Caco-2 (cell line): ENCODE measurements at regions of chr14 and their contacts with region 1.

Region 1: DNA sequence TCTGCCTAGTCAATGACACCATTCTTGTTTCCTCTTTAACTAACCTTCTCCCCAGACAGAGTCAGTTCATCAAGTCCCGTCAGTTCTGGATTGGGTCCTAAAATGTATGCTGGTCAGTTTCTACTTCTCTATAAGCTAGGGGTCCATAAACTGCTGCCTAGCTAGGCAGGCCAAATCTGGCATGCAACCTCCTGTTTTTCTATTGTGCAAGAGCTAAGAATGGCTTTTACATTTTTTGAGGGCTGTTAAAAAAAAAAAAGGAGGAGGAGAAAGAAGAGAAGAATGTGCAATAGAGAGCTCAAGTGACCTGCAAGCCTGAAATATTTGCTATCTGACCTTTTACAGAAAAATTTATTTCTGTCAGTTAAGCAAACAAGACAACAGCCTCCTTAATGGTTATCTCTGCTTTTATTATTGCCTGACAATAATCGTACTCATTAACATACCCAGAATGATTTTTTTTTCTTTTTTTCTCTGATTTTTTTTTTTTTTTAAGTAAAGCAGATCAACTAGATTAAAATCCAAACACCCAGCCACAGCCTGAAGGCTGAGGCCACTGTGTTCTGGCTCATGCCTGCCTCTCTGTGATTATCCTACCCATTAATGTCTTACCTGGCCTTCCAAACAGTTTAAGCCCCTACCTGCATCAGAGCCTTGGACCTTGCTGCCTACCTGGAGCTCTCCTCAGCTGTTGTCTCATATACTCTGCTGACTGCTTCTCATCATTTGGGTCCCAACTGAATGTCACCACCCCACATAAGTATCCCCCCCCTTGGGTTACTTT is 6.6 kb upstream of the TMED10 start:
- DNase-seq: peak; percentile 68 to 69
- H3K4me3 ChIP-seq: no peak overlapping the region
- H3K4me3 Mint-ChIP-seq: peak overlapping the region; percentile 27
- H3K27ac Mint-ChIP-seq: peak overlapping the region; percentile 81
- H3K4me1 ChIP-seq: peaks cover 32% of the 10 kb centered on the region
- H3K4me1 Mint-ChIP-seq: peaks cover 14% of the 10 kb centered on the region
- H3K27me3 ChIP-seq: no peaks in the 10 kb centered on the region
- H3K27me3 Mint-ChIP-seq: no peaks in the 10 kb centered on the region
- CTCF ChIP-seq: no peak

Region 2: DNA sequence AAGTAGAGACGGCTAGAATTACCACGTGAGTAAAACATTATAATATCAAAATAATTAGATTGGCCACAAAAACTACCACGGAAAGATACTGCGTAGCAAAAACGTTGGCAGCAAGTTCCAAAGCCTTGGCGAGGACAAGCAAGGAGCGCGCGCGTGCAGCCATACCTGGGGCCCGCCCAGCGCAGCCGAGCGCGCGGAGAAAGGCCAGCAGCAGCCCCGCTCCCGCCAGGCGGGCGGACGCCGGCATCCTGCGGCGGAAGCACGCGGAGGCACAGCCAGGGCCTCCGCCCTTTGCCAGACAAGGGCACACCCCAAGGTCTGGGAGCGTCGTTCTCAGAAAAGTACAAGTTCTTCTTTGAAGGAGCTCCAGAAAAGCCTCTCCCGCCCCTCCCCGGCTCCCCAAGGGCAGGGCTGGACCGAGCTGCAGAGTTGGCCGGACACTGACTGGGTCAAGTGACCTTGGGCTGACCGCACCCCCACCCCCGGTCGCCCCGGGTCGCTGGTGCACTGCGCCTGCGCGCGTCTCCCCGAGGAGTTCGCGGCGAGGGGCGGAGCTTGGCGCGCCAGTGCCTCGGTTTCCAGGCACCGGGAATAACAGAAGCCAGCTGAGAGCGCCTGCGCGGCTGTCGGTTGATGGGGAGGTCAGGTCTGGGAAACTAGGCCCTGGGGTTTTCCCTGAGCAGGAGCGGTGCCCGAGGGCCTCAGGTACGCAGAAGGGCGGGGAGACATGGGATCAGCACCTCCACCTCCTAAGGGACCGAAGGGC is 113.8 kb before region 1 on chr14 and contains the start of gene ZC2HC1C:
- CTCF ChIA-PET with region 1: no interaction called
- POLR2A ChIA-PET with region 1: no interaction called
- intact Hi-C with region 1: no loop called
- DNase-seq: peak; percentile 94 to 97
- H3K4me3 ChIP-seq: peak within 1 kb of the TSS; percentile 54
- H3K4me3 Mint-ChIP-seq: no peak within 1 kb of the TSS
- H3K27ac Mint-ChIP-seq: no peak within 1 kb of the TSS
- H3K4me1 ChIP-seq: peaks cover 5% of the 10 kb centered on the region
- H3K4me1 Mint-ChIP-seq: peaks cover 6% of the 10 kb centered on the region
- H3K27me3 ChIP-seq: no peaks in the 10 kb centered on the region
- H3K27me3 Mint-ChIP-seq: no peaks in the 10 kb centered on the region
- CTCF ChIP-seq: no peak
- total RNA-seq, gene ZC2HC1C: 2.5 and 3.8 TPM in 2 replicates

Region 3: GRCh38 chr14:75198291-75198933 is 15.4 kb after region 1 on chr14:
- CTCF ChIA-PET with region 1: no interaction called
- POLR2A ChIA-PET with region 1: no interaction called
- intact Hi-C with region 1: loop called (anchors 1 kb)
- DNase-seq: no peak
- H3K4me3 ChIP-seq: no peak overlapping the region
- H3K4me3 Mint-ChIP-seq: no peak overlapping the region
- H3K27ac Mint-ChIP-seq: no peak overlapping the region
- H3K4me1 ChIP-seq: peaks cover 32% of the 10 kb centered on the region
- H3K4me1 Mint-ChIP-seq: peaks cover 23% of the 10 kb centered on the region
- H3K27me3 ChIP-seq: no peaks in the 10 kb centered on the region
- H3K27me3 Mint-ChIP-seq: no peaks in the 10 kb centered on the region
- CTCF ChIP-seq: no peak

Region 4: DNA sequence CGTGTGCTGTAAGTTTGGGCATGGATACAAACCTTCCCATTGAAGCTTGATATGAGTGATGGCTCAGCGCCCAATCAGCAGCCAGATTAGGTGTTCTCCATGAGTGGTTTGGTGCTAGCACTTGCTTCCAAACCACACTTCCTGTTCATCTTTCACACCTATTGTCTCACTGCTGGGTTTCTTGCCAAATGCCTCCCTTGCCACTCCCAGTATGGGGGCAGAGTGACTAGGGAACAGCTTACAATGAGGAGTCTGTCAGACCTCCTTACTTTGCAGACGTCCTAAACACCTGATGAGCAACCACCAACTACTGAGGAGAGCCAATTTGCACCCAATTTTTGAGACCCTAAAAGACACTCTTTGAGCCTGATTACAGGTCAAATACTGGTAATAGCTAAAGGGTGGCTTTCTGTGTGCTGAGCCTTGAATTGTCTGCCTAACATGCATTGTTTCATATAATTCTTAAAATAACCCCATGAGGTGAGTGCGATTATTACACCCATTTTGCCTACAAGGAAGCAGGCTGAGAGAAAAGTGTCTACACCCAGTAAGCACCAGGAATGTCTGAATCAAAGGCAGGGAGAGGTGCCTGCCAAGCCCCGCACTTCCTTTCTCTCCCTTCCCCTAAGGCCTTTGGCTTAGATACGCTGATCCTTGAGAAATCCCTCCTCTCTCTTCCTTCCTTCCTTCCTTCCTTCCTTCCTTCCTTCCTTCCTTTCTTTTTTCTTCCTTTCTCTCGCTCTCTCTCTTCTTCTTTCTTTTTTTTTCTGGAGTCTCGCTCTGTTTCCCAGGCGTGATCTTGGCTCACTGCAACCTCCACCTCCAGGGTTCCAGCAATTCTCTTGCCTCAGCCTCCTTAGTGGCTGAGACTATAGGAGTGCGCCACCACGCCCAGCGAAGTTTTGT is 47.4 kb after region 1 on chr14:
- CTCF ChIA-PET with region 1: interaction called, 6 read pairs
- POLR2A ChIA-PET with region 1: no interaction called
- intact Hi-C with region 1: loop called (anchors 1 kb)
- DNase-seq: no peak
- H3K4me3 ChIP-seq: no peak overlapping the region
- H3K4me3 Mint-ChIP-seq: no peak overlapping the region
- H3K27ac Mint-ChIP-seq: peak overlapping the region; percentile 9
- H3K4me1 ChIP-seq: peaks cover 33% of the 10 kb centered on the region
- H3K4me1 Mint-ChIP-seq: peaks cover 36% of the 10 kb centered on the region
- H3K27me3 ChIP-seq: no peaks in the 10 kb centered on the region
- H3K27me3 Mint-ChIP-seq: no peaks in the 10 kb centered on the region
- CTCF ChIP-seq: peak in 1 of 2 experiments; percentile 22

Region 5: DNA sequence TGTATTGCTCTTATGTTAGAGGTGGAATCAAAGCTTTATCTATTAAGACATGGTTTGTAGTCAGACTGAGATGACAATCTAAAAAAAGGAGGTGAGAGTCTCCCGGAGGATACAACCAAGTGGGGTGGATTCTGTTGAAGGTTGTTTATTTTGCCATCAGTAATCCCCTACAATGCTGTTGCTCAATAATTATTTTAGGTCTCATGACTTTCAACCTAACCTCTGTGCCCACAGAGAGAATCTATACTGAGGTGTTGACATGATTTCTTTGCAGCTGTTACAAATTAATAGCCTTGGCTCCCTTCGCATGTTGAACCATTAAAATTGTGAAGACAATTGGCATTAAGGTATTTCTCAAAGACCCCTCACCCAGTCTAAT is 66.9 kb after region 1 on chr14:
- CTCF ChIA-PET with region 1: no interaction called
- POLR2A ChIA-PET with region 1: no interaction called
- intact Hi-C with region 1: no loop called
- DNase-seq: no peak
- H3K4me3 ChIP-seq: no peak overlapping the region
- H3K4me3 Mint-ChIP-seq: no peak overlapping the region
- H3K27ac Mint-ChIP-seq: no peak overlapping the region
- H3K4me1 ChIP-seq: peaks cover 14% of the 10 kb centered on the region
- H3K4me1 Mint-ChIP-seq: peaks cover 17% of the 10 kb centered on the region
- H3K27me3 ChIP-seq: no peaks in the 10 kb centered on the region
- H3K27me3 Mint-ChIP-seq: no peaks in the 10 kb centered on the region
- CTCF ChIP-seq: no peak

Region 6: DNA sequence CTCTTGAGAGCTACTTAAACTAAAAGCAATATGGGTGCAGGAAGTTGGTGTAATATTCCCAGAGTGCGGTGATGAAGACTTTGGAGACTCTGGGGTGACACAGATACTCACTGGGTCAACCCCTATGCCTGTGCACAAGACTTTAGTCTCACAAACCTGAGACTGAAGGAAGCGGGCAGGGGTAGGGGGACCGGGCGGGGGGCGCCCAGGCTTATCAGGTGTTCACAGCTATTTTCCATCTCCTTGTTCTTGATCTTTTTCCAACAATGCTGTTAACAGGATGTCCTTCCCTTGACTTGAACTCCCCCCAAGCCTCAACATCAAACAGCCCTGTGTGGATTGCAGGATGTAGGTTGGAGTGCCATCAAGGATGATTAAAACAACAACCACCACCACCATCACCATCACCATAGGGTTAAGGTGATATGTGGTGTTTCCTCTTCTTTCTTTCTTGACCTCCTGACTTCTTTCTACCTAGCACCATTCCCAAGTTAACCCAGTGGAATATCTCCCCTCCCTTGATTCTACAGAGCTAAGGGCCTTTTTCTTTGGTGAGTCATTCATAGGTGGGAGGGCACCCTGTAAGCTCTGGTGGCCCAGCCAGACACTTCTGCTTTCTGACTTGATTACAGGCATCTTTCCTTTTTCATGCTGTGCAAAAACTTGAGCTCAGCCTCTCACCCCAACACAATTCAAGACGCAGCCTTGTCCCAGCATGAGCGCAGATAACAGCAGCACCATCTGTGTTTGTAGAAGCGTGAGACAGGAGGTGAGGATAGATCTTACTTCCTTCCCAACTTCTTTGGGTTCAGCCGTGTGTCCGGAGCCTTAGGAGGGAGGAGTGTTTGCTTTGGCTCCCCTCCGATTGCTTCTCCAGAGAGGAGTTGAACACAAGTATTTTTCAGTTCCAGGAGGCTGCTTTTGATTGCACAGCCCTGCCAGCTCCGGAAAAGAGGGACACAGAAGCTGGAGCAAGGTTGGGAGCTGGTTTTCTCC is 422.1 kb after region 1 on chr14:
- CTCF ChIA-PET with region 1: no interaction called
- POLR2A ChIA-PET with region 1: no interaction called
- intact Hi-C with region 1: no loop called
- DNase-seq: no peak
- H3K4me3 ChIP-seq: no peak overlapping the region
- H3K4me3 Mint-ChIP-seq: no peak overlapping the region
- H3K27ac Mint-ChIP-seq: no peak overlapping the region
- H3K4me1 ChIP-seq: peaks cover 21% of the 10 kb centered on the region
- H3K4me1 Mint-ChIP-seq: peaks cover 22% of the 10 kb centered on the region
- H3K27me3 ChIP-seq: no peaks in the 10 kb centered on the region
- H3K27me3 Mint-ChIP-seq: no peaks in the 10 kb centered on the region
- CTCF ChIP-seq: no peak